K562 (cell line): ENCODE measurements at regions of chr19 and their contacts with region 1.

Region 1: DNA sequence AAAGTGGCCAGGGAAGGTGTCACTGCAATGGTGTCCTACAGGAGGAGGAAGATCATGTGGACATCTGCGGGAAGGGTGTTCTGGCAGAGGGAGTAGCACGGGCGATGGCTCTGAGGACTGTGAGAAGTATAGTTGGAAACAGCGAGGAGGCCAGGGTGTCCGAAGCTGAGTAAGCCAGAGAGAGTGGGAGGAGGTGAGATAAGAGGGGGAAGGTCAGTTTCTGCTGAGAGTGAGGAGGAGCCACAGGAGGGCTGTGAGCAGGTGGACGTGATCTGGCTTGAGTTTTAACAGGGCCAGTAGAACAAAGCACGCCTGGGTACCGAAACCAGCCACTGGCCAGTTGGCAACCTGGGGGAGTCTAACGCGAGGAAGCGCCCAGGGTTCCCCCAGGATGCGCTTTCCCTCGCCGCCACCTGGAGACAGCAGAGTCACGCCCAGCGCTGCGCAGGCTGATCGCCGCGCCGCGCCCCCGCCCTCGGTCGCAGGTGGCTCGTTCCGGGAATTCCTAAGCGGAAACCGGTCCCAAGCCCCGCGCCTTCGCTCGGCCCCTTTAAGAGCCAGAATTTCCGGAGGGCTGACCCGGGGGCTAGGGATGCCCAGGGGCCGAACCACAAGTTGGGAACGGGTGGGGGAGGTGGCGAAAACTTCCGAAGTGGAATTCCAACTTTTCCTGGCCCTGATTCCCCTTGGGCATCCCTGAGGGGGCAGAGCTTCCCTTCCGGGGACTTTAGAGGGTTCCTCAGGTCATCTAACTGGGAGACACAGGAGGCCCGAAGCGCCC is 1.1 kb upstream of the LSR start:
- DNase-seq: peak; percentile 80 to 92 (median 83)
- ATAC-seq: peak; percentile 83
- H3K4me3 ChIP-seq: peak overlapping the region; percentile 61
- H3K27ac ChIP-seq: peak overlapping the region; percentile 96
- H3K4me1 ChIP-seq: peaks cover 17 to 30% of the 10 kb centered on the region in 2 experiments; a peak in 4 of 5 replicates
- H3K27me3 ChIP-seq: no peaks in the 10 kb centered on the region
- CTCF ChIP-seq: peak; percentile 66 to 77 (median 67)
- EP300 ChIP-seq: peak; percentile 42
- POLR2A ChIP-seq: no peak
- RAD21 ChIP-seq: peak; percentile 64 to 72; a peak in 3 of 4 replicates

Region 2: GRCh38 chr19:35154525-35155406 is 93.0 kb before region 1 on chr19 and contains the start of gene FXYD5:
- CTCF ChIA-PET with region 1: interaction called, 3 read pairs
- POLR2A ChIA-PET with region 1: no interaction called
- in situ Hi-C with region 1: no loop called
- intact Hi-C with region 1: loop called (anchors 5 kb)
- DNase-seq: peak; percentile 88 to 94 (median 91)
- ATAC-seq: peak; percentile 92
- H3K4me3 ChIP-seq: peak within 1 kb of the TSS; percentile 92
- H3K27ac ChIP-seq: peak within 1 kb of the TSS; percentile 95
- H3K4me1 ChIP-seq: peaks cover 13 to 44% of the 10 kb centered on the region in 2 experiments; a peak in 4 of 5 replicates
- H3K27me3 ChIP-seq: no peaks in the 10 kb centered on the region
- CTCF ChIP-seq: peak in 2 of 3 experiments; percentile 16 to 18; a peak in 2 of 6 replicates
- EP300 ChIP-seq: 0 out of 2 replicates have a peak, but pooled peaks have one; percentile 30
- POLR2A ChIP-seq: peak; percentile 94
- RAD21 ChIP-seq: peak in 1 of 2 experiments; percentile 22; a peak in 3 of 4 replicates
- polyA plus RNA-seq, gene FXYD5: 125 to 198 TPM

Region 3: GRCh38 chr19:35168207-35168606 is 79.5 kb before region 1 on chr19:
- CTCF ChIA-PET with region 1: no interaction called
- POLR2A ChIA-PET with region 1: no interaction called
- in situ Hi-C with region 1: no loop called
- intact Hi-C with region 1: loop called (anchors 5 kb)
- DNase-seq: peak in 1 of 4 experiments; percentile 30
- ATAC-seq: no peak
- H3K4me3 ChIP-seq: no peak overlapping the region
- H3K27ac ChIP-seq: no peak overlapping the region; the same call in 2 of the 3 replicates
- H3K4me1 ChIP-seq: peaks cover 48 to 52% of the 10 kb centered on the region in 2 experiments
- H3K27me3 ChIP-seq: no peaks in the 10 kb centered on the region; a peak in 1 of 5 replicates
- CTCF ChIP-seq: no peak
- EP300 ChIP-seq: no peak
- POLR2A ChIP-seq: peak; percentile 54
- RAD21 ChIP-seq: no peak

Region 4: GRCh38 chr19:35204799-35205732 is 42.6 kb before region 1 on chr19:
- CTCF ChIA-PET with region 1: no interaction called
- POLR2A ChIA-PET with region 1: no interaction called
- in situ Hi-C with region 1: no loop called
- intact Hi-C with region 1: loop called (anchors 5 kb)
- DNase-seq: peak in 2 of 4 experiments; percentile 52 to 68
- ATAC-seq: peak; percentile 87
- H3K4me3 ChIP-seq: no peak overlapping the region
- H3K27ac ChIP-seq: peak overlapping the region; percentile 83
- H3K4me1 ChIP-seq: peaks cover 25 to 39% of the 10 kb centered on the region in 2 experiments
- H3K27me3 ChIP-seq: no peaks in the 10 kb centered on the region
- CTCF ChIP-seq: no peak
- EP300 ChIP-seq: 0 out of 2 replicates have a peak, but pooled peaks have one; percentile 2
- POLR2A ChIP-seq: no peak
- RAD21 ChIP-seq: peak in 1 of 2 experiments; percentile 24; a peak in 3 of 4 replicates

Region 5: DNA sequence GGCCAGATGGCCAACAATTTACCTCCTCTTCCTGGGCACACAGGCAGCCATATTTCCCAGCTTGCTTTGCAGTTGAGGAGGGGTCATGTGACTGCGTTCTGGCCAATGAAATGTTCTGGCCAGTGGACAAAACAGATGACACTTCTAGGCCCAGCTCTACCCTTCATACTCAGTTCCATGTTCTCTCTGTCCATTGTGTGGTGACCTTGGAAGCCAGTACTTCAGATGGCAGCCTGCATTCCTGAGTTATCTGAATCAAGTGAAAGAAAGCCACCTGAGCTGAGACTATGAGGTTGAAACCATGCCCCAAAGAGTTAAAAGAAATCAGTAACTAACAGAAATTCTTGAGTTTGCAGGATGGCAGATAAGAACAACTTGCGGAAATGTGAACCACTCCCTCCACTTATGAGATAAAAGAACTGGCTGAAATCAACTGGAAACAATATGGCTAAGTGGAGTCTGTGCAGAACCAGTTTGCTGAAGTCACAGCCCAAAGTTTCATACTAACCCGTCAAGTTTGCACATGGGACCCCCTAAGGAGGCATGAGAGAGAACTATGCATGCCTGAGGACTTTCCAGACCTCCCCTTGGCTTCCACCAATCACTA is 27.3 kb before region 1 on chr19:
- CTCF ChIA-PET with region 1: no interaction called
- POLR2A ChIA-PET with region 1: interaction called, 3 read pairs
- in situ Hi-C with region 1: no loop called
- intact Hi-C with region 1: loop called (anchors 2 kb)
- DNase-seq: peak; percentile 53 to 85 (median 68)
- ATAC-seq: peak; percentile 72
- H3K4me3 ChIP-seq: no peak overlapping the region
- H3K27ac ChIP-seq: peak overlapping the region; percentile 71
- H3K4me1 ChIP-seq: peaks cover 18 to 23% of the 10 kb centered on the region in 2 experiments
- H3K27me3 ChIP-seq: no peaks in the 10 kb centered on the region
- CTCF ChIP-seq: no peak
- EP300 ChIP-seq: peak; percentile 97
- POLR2A ChIP-seq: no peak
- RAD21 ChIP-seq: peak; percentile 6 to 14; a peak in 1 of 4 replicates

Region 6: GRCh38 chr19:35380450-35381124 is 132.9 kb after region 1 on chr19:
- CTCF ChIA-PET with region 1: no interaction called
- POLR2A ChIA-PET with region 1: no interaction called
- in situ Hi-C with region 1: no loop called
- intact Hi-C with region 1: no loop called
- DNase-seq: peak; percentile 80 to 94 (median 84)
- ATAC-seq: peak; percentile 97
- H3K4me3 ChIP-seq: no peak overlapping the region
- H3K27ac ChIP-seq: peak overlapping the region; percentile 36; the same call in 1 of the 3 replicates
- H3K4me1 ChIP-seq: peaks cover 20 to 29% of the 10 kb centered on the region in 2 experiments; a peak in 4 of 5 replicates
- H3K27me3 ChIP-seq: no peaks in the 10 kb centered on the region
- CTCF ChIP-seq: no peak; a peak in 1 of 6 replicates
- EP300 ChIP-seq: peak; percentile 93
- POLR2A ChIP-seq: no peak
- RAD21 ChIP-seq: no peak